Endothelial cell of umbilical vein (primary cell): ENCODE measurements at regions of chr7 and their contacts with region 1.

Region 1: GRCh38 chr7:50092579-50093491 is at the start of gene ZPBP:
- DNase-seq: peak; percentile 40
- H3K4me3 ChIP-seq: peak within 1 kb of the TSS in 1 of 3 experiments; percentile 23
- H3K27ac ChIP-seq: no peak within 1 kb of the TSS
- H3K4me1 ChIP-seq: peaks cover 3% of the 10 kb centered on the region
- H3K27me3 ChIP-seq: no peaks in the 10 kb centered on the region
- CTCF ChIP-seq: peak; percentile 48 to 49
- POLR2A ChIP-seq: no peak
- total RNA-seq, gene ZPBP: not detected in 2 replicates

Region 2: DNA sequence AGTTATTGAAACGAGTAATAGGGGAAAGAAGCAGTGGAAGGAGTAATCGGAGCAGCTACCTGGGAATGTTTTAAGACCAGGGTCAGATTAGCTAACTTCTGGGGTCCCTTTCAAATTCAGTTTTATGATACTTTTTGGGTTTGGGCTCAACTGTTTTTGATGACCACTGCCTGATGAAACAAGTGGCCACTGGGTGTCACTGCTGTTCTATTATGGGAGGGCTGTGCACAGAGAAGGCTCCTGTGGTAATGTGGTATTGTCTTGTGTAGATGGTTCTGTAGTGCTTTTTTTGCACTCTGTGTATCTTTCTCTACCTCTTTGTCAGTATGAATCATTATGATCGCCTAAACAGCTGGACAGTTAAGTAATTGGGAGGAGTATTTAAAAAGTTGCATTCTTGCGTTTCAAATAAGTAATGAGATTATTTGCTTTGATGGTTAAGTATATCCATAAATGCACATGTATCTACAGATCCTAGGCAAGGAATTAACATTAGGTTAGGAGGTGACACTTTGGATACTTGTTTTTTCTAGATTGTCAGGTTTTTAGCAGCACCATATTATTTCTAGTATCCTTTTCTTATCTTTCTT is 1793.2 kb before region 1 on chr7:
- CTCF ChIA-PET with region 1: no interaction called
- POLR2A ChIA-PET with region 1: no interaction called
- dilution Hi-C with region 1: no loop called
- intact Hi-C with region 1: loop called (anchors 5 kb)
- DNase-seq: peak; percentile 55
- H3K4me3 ChIP-seq: no peak overlapping the region
- H3K27ac ChIP-seq: no peak overlapping the region
- H3K4me1 ChIP-seq: peaks cover 3% of the 10 kb centered on the region
- H3K27me3 ChIP-seq: no peaks in the 10 kb centered on the region
- CTCF ChIP-seq: peak; percentile 61 to 63
- POLR2A ChIP-seq: no peak

Region 3: DNA sequence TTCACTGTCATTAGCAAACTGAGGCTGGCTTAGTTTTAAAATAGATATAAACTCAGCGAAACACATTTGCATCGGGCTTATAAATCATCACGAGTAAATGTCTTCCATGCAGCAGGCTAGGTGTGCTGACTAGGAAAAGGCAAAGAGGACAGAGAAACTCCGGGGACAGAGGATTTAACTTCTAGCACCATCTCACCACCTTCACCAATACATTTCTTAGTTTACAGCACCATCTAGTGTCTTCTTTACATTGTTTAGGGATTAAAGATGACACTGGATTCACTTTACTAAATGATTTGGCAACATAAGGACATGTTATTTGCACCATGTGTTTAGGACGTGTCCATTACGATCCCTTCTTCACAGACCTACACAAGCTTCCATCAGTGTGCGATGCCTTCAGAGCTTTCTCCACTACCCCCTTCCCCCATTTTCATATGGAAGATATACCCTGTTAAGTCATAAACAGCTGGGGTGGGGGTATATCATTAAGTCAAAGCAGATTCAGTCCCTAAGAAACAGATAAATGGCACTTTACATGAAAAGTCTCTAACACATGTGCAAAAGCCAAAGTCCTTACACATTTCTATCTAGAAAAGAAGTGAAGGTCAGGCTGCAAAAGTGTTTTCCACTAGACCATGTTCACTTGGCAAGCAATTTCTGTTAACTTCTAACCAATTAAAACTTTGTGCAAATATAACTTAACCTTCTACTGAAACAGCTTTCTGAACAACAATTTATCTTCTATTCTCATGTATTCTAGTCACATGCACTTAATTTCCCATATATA is 586.6 kb after region 1 on chr7:
- CTCF ChIA-PET with region 1: no interaction called
- POLR2A ChIA-PET with region 1: interaction called, 10 read pairs
- dilution Hi-C with region 1: no loop called
- intact Hi-C with region 1: no loop called
- DNase-seq: peak; percentile 41
- H3K4me3 ChIP-seq: no peak overlapping the region
- H3K27ac ChIP-seq: no peak overlapping the region
- H3K4me1 ChIP-seq: peaks cover 15% of the 10 kb centered on the region
- H3K27me3 ChIP-seq: no peaks in the 10 kb centered on the region
- CTCF ChIP-seq: peak in 1 of 2 donors; percentile 5
- POLR2A ChIP-seq: no peak

Region 4: DNA sequence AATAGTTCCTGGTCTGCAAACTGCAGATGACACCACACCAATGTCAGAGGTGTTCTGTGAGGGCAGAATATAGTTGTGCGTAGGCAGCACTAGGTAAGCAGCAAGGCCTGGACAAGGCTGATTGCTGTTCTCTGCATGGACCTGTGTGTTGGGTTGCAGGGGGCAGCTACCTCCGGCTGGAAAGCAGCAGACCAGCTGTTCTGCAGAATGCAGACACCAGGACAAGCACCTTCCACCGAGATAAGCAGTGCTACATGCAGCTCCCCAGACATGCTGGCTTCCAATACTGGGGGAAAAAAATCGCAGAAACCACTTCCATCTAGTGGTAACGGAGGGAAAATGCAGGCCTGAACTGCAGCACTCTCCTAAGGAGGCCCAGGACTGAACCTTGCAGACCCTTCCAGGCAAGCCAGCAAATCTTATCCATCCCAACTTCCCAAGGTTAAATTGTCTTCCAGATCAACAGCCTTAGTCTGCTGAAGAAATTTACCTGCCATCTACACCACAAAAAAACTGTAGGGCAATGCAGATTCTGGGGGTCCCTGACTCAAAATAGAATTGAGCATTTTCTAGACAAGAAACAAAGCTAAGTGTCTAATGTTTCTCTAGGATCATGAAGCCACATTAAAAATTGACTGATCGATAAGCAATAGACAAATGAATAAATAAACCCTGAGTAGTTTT is 1274.2 kb after region 1 on chr7:
- CTCF ChIA-PET with region 1: interaction called, 12 read pairs
- POLR2A ChIA-PET with region 1: no interaction called
- dilution Hi-C with region 1: no loop called
- intact Hi-C with region 1: loop called (anchors 5 kb)
- DNase-seq: peak; percentile 24
- H3K4me3 ChIP-seq: no peak overlapping the region
- H3K27ac ChIP-seq: no peak overlapping the region
- H3K4me1 ChIP-seq: no peaks in the 10 kb centered on the region
- H3K27me3 ChIP-seq: no peaks in the 10 kb centered on the region
- CTCF ChIP-seq: peak; percentile 35 to 57
- POLR2A ChIP-seq: no peak

Region 5: GRCh38 chr7:51430480-51431086 is 1337.7 kb after region 1 on chr7:
- CTCF ChIA-PET with region 1: no interaction called
- POLR2A ChIA-PET with region 1: no interaction called
- dilution Hi-C with region 1: no loop called
- intact Hi-C with region 1: loop called (anchors 5 kb)
- DNase-seq: peak; percentile 52
- H3K4me3 ChIP-seq: no peak overlapping the region
- H3K27ac ChIP-seq: no peak overlapping the region
- H3K4me1 ChIP-seq: no peaks in the 10 kb centered on the region
- H3K27me3 ChIP-seq: no peaks in the 10 kb centered on the region
- CTCF ChIP-seq: peak; percentile 48 to 59
- POLR2A ChIP-seq: no peak